Caco-2 (cell line): ENCODE measurements at regions of chr12 and their contacts with region 1.

Region 1: DNA sequence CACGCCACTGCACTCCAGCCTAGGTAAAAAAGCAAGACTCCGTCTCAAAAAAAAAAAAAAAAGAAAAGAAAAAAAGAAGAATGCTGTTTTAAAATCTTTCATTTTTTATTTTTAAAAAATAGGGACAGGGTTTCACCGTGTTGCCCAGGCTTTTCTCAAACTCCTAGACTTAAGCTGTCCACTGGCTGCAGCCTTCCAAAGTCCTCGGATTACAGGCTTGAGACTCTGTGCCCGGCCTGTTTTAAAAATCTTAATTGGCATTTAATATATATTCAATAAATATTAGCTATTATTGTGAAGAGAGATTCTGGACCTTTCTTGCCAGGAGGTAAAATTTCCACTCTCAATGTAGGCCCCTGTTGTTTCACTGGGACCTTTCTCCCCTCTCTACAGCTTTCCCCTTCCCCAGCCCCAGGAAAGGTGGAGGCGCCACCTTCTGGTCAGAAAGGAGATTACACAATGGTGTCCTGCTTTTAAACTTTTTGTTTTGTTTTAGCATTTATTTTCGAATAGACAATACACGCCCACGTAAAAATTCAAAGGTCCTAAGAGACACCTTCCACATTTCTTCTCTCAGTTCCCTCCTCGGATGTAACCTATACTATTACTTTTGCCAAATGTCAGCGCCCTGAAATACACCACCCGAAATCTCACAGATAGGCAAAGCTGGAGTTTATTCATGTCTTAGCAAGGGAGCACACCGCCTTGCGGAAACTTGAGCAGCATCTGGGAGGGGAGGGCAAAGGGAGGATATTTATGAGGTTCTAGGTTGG is 23.8 kb upstream of the PHC1 start:
- DNase-seq: peak; percentile 57 to 81
- H3K4me3 ChIP-seq: no peak overlapping the region
- H3K4me3 Mint-ChIP-seq: peak overlapping the region; percentile 61
- H3K27ac Mint-ChIP-seq: no peak overlapping the region
- H3K4me1 ChIP-seq: 0 out of 2 replicates have a peak, but pooled peaks cover 3% of the 10 kb centered on the region
- H3K4me1 Mint-ChIP-seq: peaks cover 6% of the 10 kb centered on the region
- H3K27me3 ChIP-seq: no peaks in the 10 kb centered on the region
- H3K27me3 Mint-ChIP-seq: peaks cover 2% of the 10 kb centered on the region
- CTCF ChIP-seq: peak; percentile 93 to 98

Region 2: GRCh38 chr12:8662593-8662992 is 227.9 kb before region 1 on chr12 and contains the start of gene MFAP5:
- CTCF ChIA-PET with region 1: interaction called, 27 read pairs
- POLR2A ChIA-PET with region 1: no interaction called
- intact Hi-C with region 1: loop called (anchors 1 kb)
- DNase-seq: no peak
- H3K4me3 ChIP-seq: no peak within 1 kb of the TSS
- H3K4me3 Mint-ChIP-seq: no peak within 1 kb of the TSS
- H3K27ac Mint-ChIP-seq: no peak within 1 kb of the TSS
- H3K4me1 ChIP-seq: no peaks in the 10 kb centered on the region
- H3K4me1 Mint-ChIP-seq: no peaks in the 10 kb centered on the region
- H3K27me3 ChIP-seq: peaks cover 2% of the 10 kb centered on the region; the same call in 1 of the 2 replicates
- H3K27me3 Mint-ChIP-seq: peaks cover 9% of the 10 kb centered on the region
- CTCF ChIP-seq: no peak
- total RNA-seq, gene MFAP5: 0.61 and 1.00 TPM in 2 replicates

Region 3: GRCh38 chr12:8780389-8780788 is 110.1 kb before region 1 on chr12:
- CTCF ChIA-PET with region 1: no interaction called
- POLR2A ChIA-PET with region 1: interaction called, 8 read pairs
- intact Hi-C with region 1: loop called (anchors 1 kb)
- DNase-seq: peak in 1 of 2 experiments; percentile 57
- H3K4me3 ChIP-seq: no peak overlapping the region
- H3K4me3 Mint-ChIP-seq: no peak overlapping the region
- H3K27ac Mint-ChIP-seq: no peak overlapping the region
- H3K4me1 ChIP-seq: no peaks in the 10 kb centered on the region
- H3K4me1 Mint-ChIP-seq: no peaks in the 10 kb centered on the region
- H3K27me3 ChIP-seq: no peaks in the 10 kb centered on the region
- H3K27me3 Mint-ChIP-seq: peaks cover 6% of the 10 kb centered on the region
- CTCF ChIP-seq: peak; percentile 53 to 60

Region 4: GRCh38 chr12:9049520-9050133 is 159.1 kb after region 1 on chr12:
- CTCF ChIA-PET with region 1: interaction called, 11 read pairs
- POLR2A ChIA-PET with region 1: no interaction called
- intact Hi-C with region 1: no loop called
- DNase-seq: peak in 1 of 2 experiments; percentile 56
- H3K4me3 ChIP-seq: no peak overlapping the region
- H3K4me3 Mint-ChIP-seq: no peak overlapping the region
- H3K27ac Mint-ChIP-seq: no peak overlapping the region
- H3K4me1 ChIP-seq: no peaks in the 10 kb centered on the region
- H3K4me1 Mint-ChIP-seq: no peaks in the 10 kb centered on the region
- H3K27me3 ChIP-seq: no peaks in the 10 kb centered on the region
- H3K27me3 Mint-ChIP-seq: peaks cover 33% of the 10 kb centered on the region
- CTCF ChIP-seq: peak; percentile 68 to 82

Region 5: DNA sequence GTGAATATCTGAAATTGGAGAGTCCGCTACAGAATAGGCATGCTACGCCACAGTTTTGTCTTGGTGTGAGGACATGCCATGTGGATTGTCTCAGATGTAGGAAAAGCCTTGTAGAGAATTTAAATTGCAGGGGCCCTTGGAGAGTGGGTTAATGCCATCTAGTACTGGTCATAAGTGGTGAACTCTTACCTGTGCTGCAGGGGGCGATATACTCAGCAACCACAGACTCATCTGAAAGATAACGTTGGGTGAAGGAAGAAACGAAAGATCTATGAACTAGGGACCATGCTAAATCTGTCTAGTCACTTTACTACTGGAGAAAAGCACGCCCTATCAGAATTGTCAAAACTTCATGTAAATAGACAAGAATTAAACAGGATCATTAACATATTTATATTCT is 258.9 kb after region 1 on chr12:
- CTCF ChIA-PET with region 1: no interaction called
- POLR2A ChIA-PET with region 1: no interaction called
- intact Hi-C with region 1: no loop called
- DNase-seq: peak in 1 of 2 experiments; percentile 15
- H3K4me3 ChIP-seq: no peak overlapping the region
- H3K4me3 Mint-ChIP-seq: no peak overlapping the region
- H3K27ac Mint-ChIP-seq: no peak overlapping the region
- H3K4me1 ChIP-seq: peaks cover 7% of the 10 kb centered on the region; the same call in 1 of the 2 replicates
- H3K4me1 Mint-ChIP-seq: peaks cover 16% of the 10 kb centered on the region
- H3K27me3 ChIP-seq: no peaks in the 10 kb centered on the region
- H3K27me3 Mint-ChIP-seq: no peaks in the 10 kb centered on the region
- CTCF ChIP-seq: no peak